Activated B cell treated with CpG ODN at 0.5 μM for 24 hours (primary cell): ENCODE measurements at regions of chr5 and their contacts with region 1.

Region 1: DNA sequence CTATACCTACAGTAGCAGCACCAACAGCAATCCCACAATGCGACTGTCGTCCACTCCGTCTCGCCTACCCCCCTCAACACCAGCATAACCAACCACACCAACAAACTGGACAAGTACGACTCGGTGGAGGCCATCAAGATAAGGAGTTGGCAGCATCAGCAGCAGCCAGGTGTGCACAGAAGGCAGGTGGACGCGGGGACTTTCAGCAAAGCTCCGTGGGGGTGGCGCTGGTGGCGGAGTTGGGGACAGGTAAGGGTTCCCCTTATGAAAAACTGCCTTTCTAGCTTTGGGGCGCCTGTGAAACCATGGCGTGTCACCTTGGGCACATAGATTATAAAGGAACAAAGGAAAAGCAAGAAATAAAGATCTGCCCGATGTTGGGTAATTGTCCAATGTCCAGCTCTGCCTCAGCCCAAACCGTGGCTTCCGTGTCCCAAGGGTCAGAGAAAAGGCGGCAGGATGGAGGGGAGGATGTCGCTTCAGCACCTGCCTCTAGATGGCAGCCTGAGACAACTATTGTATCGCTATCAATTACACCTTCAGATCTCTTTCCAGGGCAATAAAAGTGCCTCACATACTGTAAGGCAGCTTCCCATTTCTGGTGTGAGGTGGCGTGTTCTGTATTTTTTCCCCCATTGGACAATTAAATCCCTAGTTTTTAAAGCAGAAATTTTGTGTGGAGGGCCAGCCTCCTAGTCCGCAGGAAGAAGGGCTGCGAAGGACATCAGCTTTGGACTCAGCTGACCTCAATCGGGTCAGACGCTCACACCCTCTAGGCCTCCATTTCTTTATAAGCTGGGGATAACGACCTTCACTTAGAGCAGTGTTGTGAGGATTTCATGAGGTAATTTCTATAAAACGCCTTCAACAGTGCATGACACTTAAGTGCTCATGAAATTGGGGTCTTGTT is 58.8 kb downstream of the MTRR start:
- DNase-seq: no peak
- ATAC-seq: peak; percentile 64
- H3K4me3 Mint-ChIP-seq: no peak overlapping the region
- H3K27ac Mint-ChIP-seq: no peak overlapping the region
- H3K4me1 Mint-ChIP-seq: peaks cover 2% of the 10 kb centered on the region
- H3K27me3 Mint-ChIP-seq: peaks cover 2% of the 10 kb centered on the region
- CTCF ChIP-seq: peak; percentile 61

Region 2: DNA sequence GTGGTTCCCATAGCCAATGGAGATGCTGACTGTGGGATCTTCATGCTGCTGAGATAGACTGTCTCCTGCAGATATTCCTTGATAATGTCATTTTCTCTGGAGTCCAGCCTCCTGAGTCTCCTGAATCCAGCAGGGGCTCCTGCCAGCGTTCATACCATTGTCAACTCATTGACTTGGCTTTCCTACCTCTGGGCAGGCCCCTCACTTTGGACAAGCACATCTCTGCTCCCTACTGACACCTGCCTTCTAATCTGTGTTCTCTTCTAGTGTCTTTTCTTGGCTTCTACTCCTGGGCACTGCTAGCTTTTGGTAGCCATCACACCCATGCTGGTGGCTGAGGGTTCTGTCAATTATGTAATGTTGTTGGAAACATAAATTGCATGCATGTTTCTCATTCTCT is 393.8 kb before region 1 on chr5:
- CTCF ChIA-PET with region 1: no interaction called
- POLR2A ChIA-PET with region 1: no interaction called
- intact Hi-C with region 1: no loop called
- DNase-seq: no peak
- ATAC-seq: no peak
- H3K4me3 Mint-ChIP-seq: no peak overlapping the region
- H3K27ac Mint-ChIP-seq: no peak overlapping the region
- H3K4me1 Mint-ChIP-seq: no peaks in the 10 kb centered on the region
- H3K27me3 Mint-ChIP-seq: no peaks in the 10 kb centered on the region
- CTCF ChIP-seq: no peak

Region 3: DNA sequence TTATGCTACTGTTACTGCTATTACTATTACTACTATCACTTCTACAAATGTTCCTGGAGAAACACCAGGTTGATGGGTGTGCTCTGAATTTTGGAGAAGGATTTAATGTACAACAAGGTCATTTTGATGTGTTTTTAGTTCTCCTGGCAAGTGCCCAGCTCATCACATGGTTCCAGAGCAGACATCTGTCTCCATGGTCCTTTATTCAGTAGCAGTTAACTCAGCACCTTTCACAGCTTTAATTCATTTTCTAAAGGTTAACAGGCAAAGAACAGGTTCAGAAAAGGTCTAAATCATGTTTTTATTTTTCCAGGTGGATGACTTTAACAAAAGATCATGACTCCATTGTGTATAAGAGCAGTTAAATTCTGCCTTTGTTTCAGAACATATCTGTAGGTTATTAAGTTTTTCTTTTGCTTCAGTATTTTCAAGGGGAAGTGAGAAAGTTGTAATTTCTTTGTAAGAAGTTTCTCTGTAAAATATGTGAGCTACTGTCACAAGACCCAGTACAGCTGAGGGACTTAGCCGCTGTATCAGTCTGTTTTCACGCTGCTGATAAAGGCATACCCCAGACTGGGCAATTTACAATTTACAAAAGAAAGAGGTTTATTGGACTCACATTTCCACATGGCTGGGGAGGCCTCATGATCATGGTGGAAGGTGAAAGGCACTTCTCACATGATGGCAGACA is 16.8 kb before region 1 on chr5:
- CTCF ChIA-PET with region 1: interaction called, 5 read pairs
- POLR2A ChIA-PET with region 1: no interaction called
- intact Hi-C with region 1: loop called (anchors 1 kb)
- DNase-seq: no peak
- ATAC-seq: no peak
- H3K4me3 Mint-ChIP-seq: no peak overlapping the region
- H3K27ac Mint-ChIP-seq: no peak overlapping the region
- H3K4me1 Mint-ChIP-seq: peaks cover 5% of the 10 kb centered on the region
- H3K27me3 Mint-ChIP-seq: no peaks in the 10 kb centered on the region
- CTCF ChIP-seq: no peak

Region 4: DNA sequence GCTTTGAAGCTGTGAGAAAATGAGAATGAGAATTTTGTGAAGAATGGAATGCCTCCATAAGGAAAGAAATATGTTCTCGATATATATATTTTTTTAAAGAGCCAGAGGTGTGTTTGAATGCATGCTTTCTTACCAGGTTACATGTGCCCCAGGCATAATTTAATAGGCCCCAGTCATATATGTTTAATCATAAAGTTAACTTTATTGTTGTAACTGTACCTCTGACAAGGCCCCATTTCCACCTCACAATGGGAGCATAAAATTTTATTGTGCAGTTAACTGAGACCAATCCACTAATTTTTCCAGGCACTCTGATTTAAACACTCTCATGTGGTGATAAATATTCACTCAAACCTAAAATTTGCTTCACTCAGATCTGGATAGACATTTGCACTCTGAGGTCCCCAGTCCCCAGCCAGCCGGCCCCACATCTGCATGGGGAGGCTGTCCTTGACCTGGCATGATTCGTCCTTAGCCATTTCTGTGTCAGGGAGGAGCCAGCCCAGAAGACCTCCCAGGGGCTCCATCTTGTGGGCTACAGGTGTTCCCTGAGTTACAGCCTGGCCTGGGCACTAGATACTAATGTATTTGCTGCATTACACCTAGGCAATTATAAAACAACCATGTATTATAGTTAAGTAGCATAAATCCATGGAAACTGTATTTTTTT is 187.0 kb after region 1 on chr5:
- CTCF ChIA-PET with region 1: no interaction called
- POLR2A ChIA-PET with region 1: no interaction called
- intact Hi-C with region 1: loop called (anchors 5 kb)
- DNase-seq: no peak
- ATAC-seq: no peak
- H3K4me3 Mint-ChIP-seq: no peak overlapping the region
- H3K27ac Mint-ChIP-seq: no peak overlapping the region
- H3K4me1 Mint-ChIP-seq: no peaks in the 10 kb centered on the region
- H3K27me3 Mint-ChIP-seq: no peaks in the 10 kb centered on the region
- CTCF ChIP-seq: no peak

Region 5: DNA sequence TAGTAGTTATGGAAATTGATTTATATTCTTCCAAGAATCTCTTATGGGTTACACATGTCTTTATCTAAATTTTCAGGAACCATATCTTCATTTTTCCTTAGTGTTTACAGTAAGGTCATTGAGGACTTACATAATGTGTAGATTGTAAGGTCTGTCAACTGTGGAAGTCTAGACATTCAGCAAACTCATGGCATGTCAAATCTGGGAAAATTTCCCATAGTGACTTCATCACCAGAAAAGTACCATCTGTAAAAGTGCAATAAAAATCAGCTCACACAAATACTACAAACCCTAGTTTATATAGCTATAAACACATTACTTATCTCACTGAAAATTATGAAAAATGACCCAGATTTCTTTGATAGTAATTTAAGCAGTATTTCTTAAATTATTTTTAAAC is 360.6 kb after region 1 on chr5:
- CTCF ChIA-PET with region 1: no interaction called
- POLR2A ChIA-PET with region 1: no interaction called
- intact Hi-C with region 1: no loop called
- DNase-seq: no peak
- ATAC-seq: no peak
- H3K4me3 Mint-ChIP-seq: no peak overlapping the region
- H3K27ac Mint-ChIP-seq: no peak overlapping the region
- H3K4me1 Mint-ChIP-seq: no peaks in the 10 kb centered on the region
- H3K27me3 Mint-ChIP-seq: no peaks in the 10 kb centered on the region
- CTCF ChIP-seq: no peak

Region 6: GRCh38 chr5:8686707-8687106 is 759.0 kb after region 1 on chr5:
- CTCF ChIA-PET with region 1: no interaction called
- POLR2A ChIA-PET with region 1: no interaction called
- intact Hi-C with region 1: loop called (anchors 5 kb)
- DNase-seq: no peak
- ATAC-seq: no peak
- H3K4me3 Mint-ChIP-seq: no peak overlapping the region
- H3K27ac Mint-ChIP-seq: no peak overlapping the region
- H3K4me1 Mint-ChIP-seq: no peaks in the 10 kb centered on the region
- H3K27me3 Mint-ChIP-seq: no peaks in the 10 kb centered on the region
- CTCF ChIP-seq: no peak

Region 7: DNA sequence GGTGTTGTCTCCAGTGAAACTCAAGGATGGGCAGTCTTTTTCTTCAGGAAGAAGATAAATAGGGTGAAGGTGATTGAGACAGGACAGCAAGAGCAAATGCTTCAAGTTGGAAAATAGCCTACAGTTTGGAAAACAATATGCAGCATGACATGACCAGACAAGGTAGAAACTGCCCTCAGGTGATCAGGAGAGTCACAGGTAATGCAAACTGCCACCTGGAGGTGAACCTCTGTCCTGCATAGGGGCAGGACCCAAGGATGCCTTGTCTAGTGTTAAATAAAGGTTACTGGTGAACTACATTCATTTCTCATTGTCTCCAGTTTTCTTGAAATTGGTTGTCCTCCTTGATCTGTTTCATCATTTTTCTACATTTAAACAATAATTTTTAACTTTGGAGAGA is 1386.0 kb after region 1 on chr5:
- CTCF ChIA-PET with region 1: no interaction called
- POLR2A ChIA-PET with region 1: no interaction called
- intact Hi-C with region 1: loop called (anchors 5 kb)
- DNase-seq: no peak
- ATAC-seq: no peak
- H3K4me3 Mint-ChIP-seq: no peak overlapping the region
- H3K27ac Mint-ChIP-seq: no peak overlapping the region
- H3K4me1 Mint-ChIP-seq: no peaks in the 10 kb centered on the region
- H3K27me3 Mint-ChIP-seq: no peaks in the 10 kb centered on the region
- CTCF ChIP-seq: no peak